ENCODE measurements at regions of chr6 and their contacts with region 1.

Region 1: DNA sequence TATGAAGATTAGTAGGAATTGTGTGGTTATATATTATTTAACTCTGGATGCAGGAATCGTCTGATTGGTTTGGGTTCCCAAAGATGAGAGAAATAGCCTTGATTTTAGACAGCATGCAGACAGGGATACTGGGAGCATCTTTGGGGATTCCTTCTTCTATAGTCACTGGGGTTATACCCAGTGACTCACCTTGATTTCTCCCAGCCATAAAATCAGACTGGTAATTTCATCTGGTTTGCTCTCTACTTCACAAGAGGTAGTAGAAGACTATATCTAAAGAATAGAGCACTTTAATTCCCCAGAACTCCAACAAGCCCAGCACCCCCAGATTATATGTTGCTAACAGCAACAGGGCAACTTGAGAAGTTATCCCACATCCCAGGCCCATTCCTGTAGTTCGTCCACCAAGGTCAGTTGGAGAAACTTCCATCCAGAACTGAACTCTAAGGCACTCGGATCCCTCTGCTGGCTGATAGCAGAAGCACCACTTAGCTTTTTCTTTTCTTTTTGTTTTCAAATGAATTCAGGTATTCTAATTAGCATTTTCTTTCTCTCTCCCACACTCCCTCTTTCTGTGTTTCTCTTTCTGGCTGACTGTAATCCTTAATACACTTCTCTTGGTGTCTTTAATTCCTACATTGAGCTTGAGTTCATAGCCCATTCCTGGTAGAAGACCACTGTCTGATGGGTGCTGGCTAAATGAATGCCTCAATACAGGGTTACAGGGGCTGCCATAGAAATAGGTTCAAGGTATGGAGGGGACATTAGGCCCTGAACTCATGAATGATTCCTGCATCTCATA is 20.4 kb upstream of the EFHC1 start:
- DNase-seq: peak; percentile 83
- H3K4me3 Mint-ChIP-seq: no peak overlapping the region
- H3K27ac Mint-ChIP-seq: no peak overlapping the region
- H3K4me1 Mint-ChIP-seq: peaks cover 45% of the 10 kb centered on the region
- H3K27me3 Mint-ChIP-seq: no peaks in the 10 kb centered on the region

Region 2: GRCh38 chr6:52063584-52064344 is 335.9 kb before region 1 on chr6:
- intact Hi-C with region 1: loop called (anchors 10 kb)
- DNase-seq: peak; percentile 86
- H3K4me3 Mint-ChIP-seq: peak overlapping the region; percentile 53
- H3K27ac Mint-ChIP-seq: peak overlapping the region; percentile 72
- H3K4me1 Mint-ChIP-seq: peaks cover 7% of the 10 kb centered on the region
- H3K27me3 Mint-ChIP-seq: peaks cover 13% of the 10 kb centered on the region

Region 3: DNA sequence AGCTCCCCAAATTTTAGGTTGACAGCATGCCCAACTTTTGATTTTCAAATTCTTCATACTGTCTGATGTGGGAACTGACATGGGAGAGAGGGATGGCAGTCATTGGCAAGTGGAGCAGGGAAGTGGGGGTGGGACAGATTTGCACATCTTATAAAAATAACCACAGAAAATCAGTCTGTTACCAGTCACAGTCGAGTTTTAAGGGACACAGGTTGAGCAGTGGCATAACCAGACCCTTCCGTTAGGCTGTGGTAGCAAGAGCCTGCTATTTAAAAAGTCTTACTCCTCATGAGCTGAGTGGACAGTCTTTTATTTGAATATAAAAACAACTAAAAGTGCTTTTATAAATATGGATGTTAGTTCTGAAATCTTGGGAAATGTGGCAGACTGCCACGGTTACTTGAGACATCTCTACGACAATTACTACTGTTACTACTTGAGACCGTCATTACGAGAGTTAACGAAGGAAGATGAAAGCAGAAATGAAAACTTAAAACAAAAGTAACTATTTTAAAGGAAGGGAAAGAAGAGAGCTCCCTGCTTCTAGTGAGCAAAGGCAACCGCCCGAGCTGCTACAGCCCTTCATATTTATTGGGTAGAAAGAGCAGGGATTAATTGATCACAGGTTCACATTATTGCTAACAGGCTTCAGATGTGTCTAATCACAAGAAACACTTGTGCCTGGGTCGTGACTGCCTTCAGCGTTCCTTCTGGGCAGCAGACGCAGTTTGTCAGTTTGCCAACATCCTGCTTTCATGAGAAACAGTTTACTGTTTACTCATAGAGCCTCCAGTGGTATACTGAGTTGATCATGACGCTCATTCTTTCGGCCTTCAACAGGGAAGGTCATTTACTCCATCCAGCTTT is 91.7 kb after region 1 on chr6:
- intact Hi-C with region 1: no loop called
- DNase-seq: no peak
- H3K4me3 Mint-ChIP-seq: no peak overlapping the region
- H3K27ac Mint-ChIP-seq: no peak overlapping the region
- H3K4me1 Mint-ChIP-seq: peaks cover 10% of the 10 kb centered on the region
- H3K27me3 Mint-ChIP-seq: peaks cover 6% of the 10 kb centered on the region

Region 4: DNA sequence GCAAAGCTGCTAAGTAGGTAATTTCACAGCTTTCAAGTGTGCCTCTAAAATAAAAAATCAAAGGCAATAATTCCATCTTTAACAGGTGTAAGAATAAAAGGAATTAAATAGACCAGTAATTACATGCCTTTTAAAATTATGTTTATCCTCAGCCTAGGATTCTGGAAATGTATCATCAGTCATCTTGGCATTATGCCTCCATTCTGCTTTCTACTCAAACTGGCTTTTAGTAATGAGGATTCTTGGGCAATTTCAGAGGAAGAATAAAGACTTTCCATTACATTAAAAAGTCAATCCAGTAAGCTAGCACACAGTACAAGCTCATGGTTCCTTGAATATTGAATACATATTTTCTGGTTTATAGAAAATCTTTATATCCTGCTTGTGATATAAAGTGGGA is 318.8 kb after region 1 on chr6:
- intact Hi-C with region 1: no loop called
- DNase-seq: no peak
- H3K4me3 Mint-ChIP-seq: no peak overlapping the region
- H3K27ac Mint-ChIP-seq: no peak overlapping the region
- H3K4me1 Mint-ChIP-seq: no peaks in the 10 kb centered on the region
- H3K27me3 Mint-ChIP-seq: peaks cover 11% of the 10 kb centered on the region

Measured in activated CD4-positive, alpha-beta T cell treated with anti-CD3 and anti-CD28 coated beads, Interleukin-2, amount 10 ng/mL, durations not matched to agents 24 days and 14 days (primary cell).